KBM-7 (cell line): ENCODE measurements at regions of chr9 and their contacts with region 1.

Region 1: DNA sequence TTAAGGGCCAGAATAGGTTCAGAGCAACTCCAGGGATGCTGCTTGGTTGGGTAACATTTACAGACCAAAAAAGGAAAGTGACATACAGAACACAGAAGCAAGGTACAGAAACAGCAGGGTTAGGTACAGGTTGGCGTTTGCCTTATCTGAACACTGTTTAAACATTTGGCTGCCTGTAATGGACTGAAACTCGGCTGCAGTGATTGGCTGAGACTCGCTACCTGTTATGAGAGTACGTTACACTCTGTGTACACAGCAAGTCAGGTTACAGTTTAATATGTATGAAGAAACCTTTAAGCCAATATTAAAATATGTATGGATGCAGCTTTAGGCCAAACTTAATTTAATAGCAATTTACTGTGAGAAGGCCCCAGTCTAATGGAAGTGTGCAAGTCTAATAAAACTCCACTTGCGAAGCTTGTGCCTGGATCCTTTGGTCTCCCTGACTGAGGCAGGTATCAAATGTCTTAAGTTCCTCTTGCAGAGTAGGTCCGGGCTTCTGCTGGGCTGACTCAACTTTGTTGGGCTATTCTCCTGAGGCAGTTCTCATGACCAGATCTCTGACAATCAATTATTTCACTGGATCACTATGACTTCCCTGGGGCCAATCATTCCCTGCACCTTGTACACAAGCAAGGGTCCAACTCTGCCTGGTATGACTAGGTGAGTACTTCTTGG is 204.9 kb downstream of the ZNF462 start:
- DNase-seq: no peak

Region 2: GRCh38 chr9:107172160-107172978 is 104.5 kb after region 1 on chr9:
- in situ Hi-C with region 1: loop called (anchors 25 kb)
- DNase-seq: peak; percentile 74